Ascending aorta (tissue), 2 donors: ENCODE measurements at regions of chr6 and their contacts with region 1.

Region 1: GRCh38 chr6:35452186-35453090 is at the start of gene FANCE:
- DNase-seq: peak; percentile 69 to 98
- H3K4me3 ChIP-seq: peak within 1 kb of the TSS; percentile 78 to 82
- H3K27ac ChIP-seq: peak within 1 kb of the TSS; percentile 61 to 66
- H3K4me1 ChIP-seq: no peaks in the 10 kb centered on the region
- H3K27me3 ChIP-seq: no peaks in the 10 kb centered on the region
- CTCF ChIP-seq: no peak
- total RNA-seq, gene FANCE: 0.32 TPM

Region 2: GRCh38 chr6:35297601-35298481 is 154.6 kb before region 1 on chr6 and contains the start of gene DEF6:
- intact Hi-C with region 1: loop called (anchors 2 kb)
- DNase-seq: peak; percentile 62 to 86
- H3K4me3 ChIP-seq: peak within 1 kb of the TSS; percentile 21 to 53
- H3K27ac ChIP-seq: peak within 1 kb of the TSS; percentile 7 to 15
- H3K4me1 ChIP-seq: peaks cover 0 to 3% of the 10 kb centered on the region in 2 donors
- H3K27me3 ChIP-seq: no peaks in the 10 kb centered on the region
- CTCF ChIP-seq: peak; percentile 43 to 83 (median 68)
- total RNA-seq, gene DEF6: 20.1 TPM

Region 3: DNA sequence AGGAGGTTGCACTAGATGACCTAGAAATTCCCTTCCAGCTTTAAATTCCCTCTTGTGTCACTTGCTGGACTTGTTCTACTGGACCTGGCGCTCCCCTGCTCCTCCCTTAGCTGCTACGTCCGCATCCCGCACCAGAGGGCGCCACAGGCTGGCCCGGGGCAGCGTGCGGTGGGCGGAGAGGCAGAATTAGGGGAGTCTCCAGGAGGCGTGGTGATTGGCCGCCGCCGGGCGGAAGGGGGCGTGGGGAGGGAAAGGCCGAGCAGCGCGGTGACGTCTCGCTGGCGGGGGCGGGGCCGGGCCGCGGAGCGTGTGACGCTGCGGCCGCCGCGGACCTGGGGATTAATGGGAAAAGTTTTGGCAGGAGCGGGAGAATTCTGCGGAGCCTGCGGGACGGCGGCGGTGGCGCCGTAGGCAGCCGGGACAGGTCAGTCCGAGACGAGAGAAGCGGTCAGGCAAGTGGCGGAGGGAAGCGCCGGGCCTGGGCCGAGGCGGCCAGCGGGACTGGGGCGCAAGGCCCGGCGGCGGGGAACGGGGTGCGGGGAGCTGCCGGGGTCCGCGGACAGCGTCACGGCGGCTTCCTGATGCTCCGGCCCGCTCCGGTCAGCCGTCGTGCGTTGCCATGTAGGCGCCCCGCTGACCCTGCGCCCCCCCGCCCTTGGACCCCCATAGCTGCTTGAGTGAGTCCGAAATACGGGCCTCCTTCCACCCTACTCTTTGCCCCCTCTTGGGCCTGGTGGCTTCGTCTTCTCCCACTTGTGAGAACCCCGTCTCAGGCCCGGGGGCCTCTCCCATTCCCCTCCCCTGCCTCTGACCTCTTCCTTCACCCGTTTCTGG is 110.0 kb before region 1 on chr6 and contains the start of gene PPARD:
- intact Hi-C with region 1: loop called (anchors 1 kb)
- DNase-seq: peak; percentile 91 to 99
- H3K4me3 ChIP-seq: peak within 1 kb of the TSS; percentile 82 to 90
- H3K27ac ChIP-seq: peak within 1 kb of the TSS; percentile 89 to 93
- H3K4me1 ChIP-seq: peaks cover 0 to 11% of the 10 kb centered on the region in 2 donors
- H3K27me3 ChIP-seq: no peaks in the 10 kb centered on the region
- CTCF ChIP-seq: peak; percentile 98 to 99 (median 99)
- total RNA-seq, gene PPARD: 21.1 TPM

Region 4: DNA sequence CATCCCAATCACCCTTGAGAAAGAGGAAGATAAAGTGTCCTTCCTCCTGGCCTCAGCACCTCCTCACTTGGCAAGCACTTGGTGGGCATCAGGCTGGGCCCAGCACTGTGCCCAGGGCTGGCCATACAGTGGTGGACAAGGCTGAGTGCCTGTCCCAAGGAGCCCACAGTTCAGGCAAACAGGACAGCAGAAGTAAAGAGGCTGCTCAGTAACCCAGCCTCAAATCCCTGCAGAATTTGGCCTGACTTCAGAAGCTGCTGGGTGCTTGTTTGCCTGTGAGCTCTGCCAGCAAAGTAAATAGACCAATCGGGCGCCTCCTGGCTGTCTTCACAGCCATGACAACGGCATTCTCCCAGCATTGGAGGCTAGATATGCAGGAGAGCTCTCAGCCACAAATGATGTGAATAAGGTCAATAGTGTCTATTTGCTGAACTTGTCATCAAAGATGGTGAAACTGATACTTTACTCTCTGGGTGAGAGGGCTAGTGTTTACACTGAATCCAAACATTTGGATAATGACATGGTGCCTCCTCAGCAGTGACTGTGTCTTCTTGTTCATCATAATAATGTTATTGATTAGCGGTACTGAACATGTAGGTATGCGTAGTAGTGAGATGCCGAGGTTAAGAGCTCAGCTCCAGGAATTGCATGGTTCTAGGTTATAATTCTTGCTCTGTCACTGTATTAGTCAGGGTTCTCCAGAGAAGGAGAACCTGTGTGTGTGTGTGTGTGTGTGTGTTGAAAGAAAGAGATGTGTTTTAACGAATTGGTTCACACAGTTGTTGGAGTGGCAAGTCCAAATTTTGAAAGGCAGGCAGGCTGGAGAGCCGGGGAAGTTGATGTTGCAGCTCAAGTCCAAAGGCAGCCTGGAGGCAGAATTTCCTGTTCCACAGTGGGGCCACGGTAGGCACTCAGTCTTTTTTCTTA is 37.1 kb before region 1 on chr6:
- intact Hi-C with region 1: loop called (anchors 2 kb)
- DNase-seq: peak in 1 of 2 donors; percentile 79
- H3K4me3 ChIP-seq: no peak overlapping the region
- H3K27ac ChIP-seq: no peak overlapping the region
- H3K4me1 ChIP-seq: no peaks in the 10 kb centered on the region
- H3K27me3 ChIP-seq: no peaks in the 10 kb centered on the region
- CTCF ChIP-seq: peak; percentile 37 to 63 (median 53)

Region 5: GRCh38 chr6:35468181-35468979 is 15.9 kb after region 1 on chr6 and contains the start of gene RPL10A:
- intact Hi-C with region 1: loop called (anchors 1 kb)
- DNase-seq: peak; percentile 82 to 97
- H3K4me3 ChIP-seq: peak within 1 kb of the TSS; percentile 72 to 78
- H3K27ac ChIP-seq: peak within 1 kb of the TSS; percentile 84 to 88
- H3K4me1 ChIP-seq: peaks cover 5 to 19% of the 10 kb centered on the region in 2 donors
- H3K27me3 ChIP-seq: no peaks in the 10 kb centered on the region
- CTCF ChIP-seq: peak; percentile 97 to 98 (median 98)
- total RNA-seq, gene RPL10A: 643 TPM

Region 6: GRCh38 chr6:35496841-35497570 is 44.6 kb after region 1 on chr6 and contains the start of gene TEAD3:
- intact Hi-C with region 1: loop called (anchors 2 kb)
- DNase-seq: peak in 1 of 2 donors; percentile 80
- H3K4me3 ChIP-seq: peak within 1 kb of the TSS; percentile 96 to 98
- H3K27ac ChIP-seq: peak within 1 kb of the TSS; percentile 99 to 100
- H3K4me1 ChIP-seq: peaks cover 16 to 31% of the 10 kb centered on the region in 2 donors
- H3K27me3 ChIP-seq: no peaks in the 10 kb centered on the region
- CTCF ChIP-seq: peak in 2 of 3 experiments; percentile 18 to 37
- total RNA-seq, gene TEAD3: 19.8 TPM

Region 7: GRCh38 chr6:35731736-35732532 is 279.5 kb after region 1 on chr6:
- intact Hi-C with region 1: loop called (anchors 5 kb)
- DNase-seq: peak; percentile 86 to 98
- H3K4me3 ChIP-seq: peak overlapping the region; percentile 59 to 84
- H3K27ac ChIP-seq: peak overlapping the region; percentile 100
- H3K4me1 ChIP-seq: peaks cover 47 to 67% of the 10 kb centered on the region in 2 donors
- H3K27me3 ChIP-seq: no peaks in the 10 kb centered on the region
- CTCF ChIP-seq: no peak

Region 8: DNA sequence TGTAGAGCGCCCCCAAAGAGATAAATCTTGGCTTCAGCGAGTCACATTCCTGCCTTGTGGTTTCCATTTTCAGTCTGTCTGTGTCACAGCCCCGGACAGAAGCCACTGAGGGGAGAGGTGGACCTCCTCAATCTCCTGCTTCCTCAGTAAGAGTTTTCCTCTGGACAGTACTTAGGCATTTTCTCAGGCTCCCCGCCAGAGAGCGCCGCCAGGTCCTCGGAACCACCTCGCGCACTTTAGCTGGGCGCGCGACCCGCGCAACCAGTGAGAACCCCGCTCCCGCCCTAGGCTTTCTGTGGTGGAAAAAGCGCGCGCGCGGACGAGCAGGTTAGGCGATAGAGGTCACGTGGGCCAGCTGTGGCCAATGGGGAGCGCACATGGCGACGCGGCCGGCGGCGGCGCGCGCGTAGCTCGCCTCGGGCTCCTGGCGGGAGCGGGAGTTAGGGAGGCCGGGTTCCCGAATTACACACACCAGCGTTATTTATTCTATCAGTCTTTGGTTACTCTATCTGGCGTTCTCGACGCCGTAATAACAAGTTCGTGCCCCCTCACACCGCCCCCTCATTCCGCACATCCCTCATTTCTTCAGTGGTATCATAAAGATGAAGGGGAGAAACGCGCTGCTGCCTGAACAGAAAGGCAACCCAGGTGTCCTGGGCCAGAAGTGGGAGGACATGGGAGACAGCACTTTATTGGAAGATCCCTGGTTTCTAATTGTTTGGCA is 970.8 kb after region 1 on chr6:
- intact Hi-C with region 1: no loop called
- DNase-seq: peak; percentile 93 to 99
- H3K4me3 ChIP-seq: peak overlapping the region; percentile 51 to 75
- H3K27ac ChIP-seq: peak overlapping the region; percentile 80 to 87
- H3K4me1 ChIP-seq: peaks cover 3 to 4% of the 10 kb centered on the region in 2 donors
- H3K27me3 ChIP-seq: no peaks in the 10 kb centered on the region
- CTCF ChIP-seq: peak; percentile 55 to 78 (median 60)